ENCODE measurements at regions of chr6 and their contacts with region 1.

Region 1: GRCh38 chr6:57172136-57173055 is at the start of gene BAG2:
- DNase-seq: peak; percentile 86 to 93 (median 91)
- ATAC-seq: peak; percentile 71 to 97 (median 95)
- H3K4me3 ChIP-seq: peak within 1 kb of the TSS; percentile 55 to 86 (median 78)
- H3K27ac ChIP-seq: peak within 1 kb of the TSS; percentile 31 to 97 (median 92)
- H3K4me1 ChIP-seq: peaks cover 0 to 32% (median 12%) of the 10 kb centered on the region in 12 donors
- H3K27me3 ChIP-seq: no peaks in the 10 kb centered on the region
- CTCF ChIP-seq: peak in 9 of 12 donors; percentile 9 to 50 (median 23)
- POLR2A ChIP-seq: peak in 1 of 2 donors; percentile 84
- total RNA-seq, gene BAG2: 8.2 to 18.0 (median 11.6) TPM

Region 2: DNA sequence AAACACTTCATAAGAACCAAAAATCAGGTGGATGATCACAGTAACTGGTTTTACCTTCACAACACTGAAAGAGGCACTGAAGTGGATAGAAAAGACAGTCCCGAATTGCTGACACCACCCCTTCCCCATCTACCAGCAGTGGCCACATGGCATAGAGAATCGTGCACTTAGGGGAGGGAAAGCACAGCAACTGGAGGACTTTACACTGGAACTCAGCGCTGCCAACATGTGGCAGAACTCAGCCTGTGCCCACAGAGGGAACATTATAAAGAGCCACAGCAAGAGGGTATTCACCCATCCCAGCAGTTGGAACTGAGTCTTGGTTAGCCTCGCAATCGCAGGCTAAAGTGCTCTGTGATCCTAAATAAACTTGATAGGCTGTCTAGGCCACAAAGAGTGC is 132.4 kb before region 1 on chr6:
- intact Hi-C with region 1: loop called in 1 of 10 experiments (anchors 10 kb)
- DNase-seq: no peak
- ATAC-seq: no peak
- H3K4me3 ChIP-seq: no peak overlapping the region
- H3K27ac ChIP-seq: no peak overlapping the region
- H3K4me1 ChIP-seq: no peaks in the 10 kb centered on the region
- H3K27me3 ChIP-seq: peaks cover 0 to 12% (median 0%) of the 10 kb centered on the region in 9 donors
- CTCF ChIP-seq: no peak
- POLR2A ChIP-seq: no peak

Region 3: DNA sequence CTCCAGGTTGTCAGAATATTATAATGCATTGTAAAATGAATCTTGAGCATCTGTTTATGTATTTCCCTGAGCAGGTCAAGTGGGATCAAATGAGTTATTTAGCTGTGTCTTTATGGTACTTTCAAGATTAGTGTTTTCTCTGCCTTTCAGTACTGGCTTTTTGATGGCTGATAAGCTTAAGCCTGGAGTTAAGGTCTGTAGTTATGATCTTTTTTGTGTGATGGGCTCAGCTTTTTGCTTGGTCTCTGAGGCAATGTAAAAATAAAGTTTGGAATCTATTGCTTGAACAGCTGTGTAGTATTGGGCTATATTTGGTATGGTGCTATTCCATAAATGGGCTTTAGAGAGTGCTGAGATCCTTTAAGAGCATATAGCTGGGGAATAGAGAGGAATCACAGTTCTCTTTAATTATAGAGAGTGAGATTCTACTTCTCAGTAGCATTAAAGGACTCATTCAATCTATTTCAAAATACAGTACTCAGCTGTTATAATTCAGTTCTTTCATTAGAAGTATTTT is 41.7 kb before region 1 on chr6:
- intact Hi-C with region 1: loop called in 1 of 10 experiments (anchors 2 kb)
- DNase-seq: no peak
- ATAC-seq: peak in 2 of 4 donors; percentile 58 to 62
- H3K4me3 ChIP-seq: no peak overlapping the region
- H3K27ac ChIP-seq: no peak overlapping the region
- H3K4me1 ChIP-seq: peaks cover 0 to 16% (median 11%) of the 10 kb centered on the region in 12 donors
- H3K27me3 ChIP-seq: no peaks in the 10 kb centered on the region
- CTCF ChIP-seq: peak in 2 of 12 donors; percentile 7 to 12
- POLR2A ChIP-seq: no peak

Region 4: DNA sequence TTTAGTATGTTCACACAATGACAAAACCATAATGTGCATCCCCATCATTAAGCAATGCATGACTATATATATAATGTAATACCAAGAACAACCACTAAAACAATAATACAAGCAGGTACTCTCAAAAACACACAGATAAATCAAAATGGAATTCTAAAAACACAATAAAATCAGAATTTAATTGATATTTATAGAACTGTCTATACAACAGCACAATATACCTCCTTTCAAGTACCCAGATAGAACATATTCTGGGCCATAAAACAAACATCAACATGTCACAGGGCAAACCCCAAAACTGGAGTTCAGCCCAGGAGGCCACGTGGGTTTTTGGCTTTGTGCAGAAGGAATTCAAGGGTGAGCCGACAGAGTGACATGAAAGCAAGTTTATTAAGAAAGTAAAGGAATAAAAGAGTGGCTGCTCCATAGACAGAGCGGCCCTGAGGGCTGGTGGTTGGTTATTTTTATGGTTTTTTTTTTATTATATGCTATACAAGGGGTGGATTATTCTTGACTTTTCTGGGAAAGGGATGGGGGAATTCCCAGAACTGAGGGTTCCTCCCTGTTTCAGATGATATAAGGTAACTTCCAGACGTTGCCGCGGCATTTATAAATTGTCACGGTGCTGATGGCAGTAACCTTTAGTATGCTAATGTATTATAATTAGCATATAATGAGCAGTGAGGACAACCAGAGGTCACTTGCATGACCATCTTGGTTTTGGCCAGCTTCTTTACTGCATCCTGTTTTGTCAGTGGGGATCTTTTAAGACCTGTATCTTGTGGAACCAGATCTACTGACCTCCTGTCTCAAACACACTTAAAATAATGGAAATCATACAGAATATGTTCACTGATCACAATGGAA is 44.1 kb after region 1 on chr6:
- intact Hi-C with region 1: loop called in 4 of 10 experiments (anchors 2 to 5 kb)
- DNase-seq: peak in 3 of 5 donors; percentile 23 to 45 (median 30)
- ATAC-seq: peak; percentile 42 to 81 (median 58)
- H3K4me3 ChIP-seq: no peak overlapping the region
- H3K27ac ChIP-seq: peak overlapping the region in 2 of 12 donors; percentile 25 to 32
- H3K4me1 ChIP-seq: peaks cover 0 to 11% (median 0%) of the 10 kb centered on the region in 12 donors
- H3K27me3 ChIP-seq: no peaks in the 10 kb centered on the region
- CTCF ChIP-seq: peak in 3 of 12 donors; percentile 43 to 69 (median 60)
- POLR2A ChIP-seq: no peak

Region 5: GRCh38 chr6:57221936-57222742 is 49.7 kb after region 1 on chr6 and contains the start of gene RAB23:
- intact Hi-C with region 1: loop called in 4 of 10 experiments (anchors 2 to 5 kb)
- DNase-seq: peak; percentile 84 to 94 (median 89)
- ATAC-seq: peak; percentile 98 to 99 (median 98)
- H3K4me3 ChIP-seq: peak within 1 kb of the TSS; percentile 64 to 98 (median 86)
- H3K27ac ChIP-seq: peak within 1 kb of the TSS; percentile 14 to 96 (median 84)
- H3K4me1 ChIP-seq: peaks cover 0 to 15% (median 3%) of the 10 kb centered on the region in 12 donors
- H3K27me3 ChIP-seq: no peaks in the 10 kb centered on the region
- CTCF ChIP-seq: peak in 2 of 12 donors; percentile 5 to 34
- POLR2A ChIP-seq: peak in 1 of 2 donors; percentile 86
- total RNA-seq, gene RAB23: 7.6 to 15.4 (median 9.6) TPM

Region 6: DNA sequence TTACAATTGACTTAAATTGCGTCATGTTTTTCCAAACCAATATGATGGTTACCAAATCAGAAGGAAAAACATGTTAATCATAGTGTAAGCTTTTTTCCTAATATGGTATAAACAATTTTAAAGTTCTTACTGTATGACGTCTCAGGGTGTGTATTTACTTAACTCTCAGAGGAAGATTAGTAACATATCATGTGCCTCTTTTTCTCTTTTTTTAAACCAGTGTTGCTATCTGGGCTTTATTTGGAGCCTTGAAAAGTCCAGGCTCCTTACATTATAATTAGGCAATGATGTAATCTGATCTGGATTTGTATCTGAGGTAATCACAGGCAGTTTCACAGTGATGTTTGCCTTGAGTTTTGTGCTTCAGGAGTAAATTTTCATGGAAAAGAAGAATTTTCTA is 70.1 kb after region 1 on chr6:
- intact Hi-C with region 1: no loop called
- DNase-seq: no peak
- ATAC-seq: peak in 3 of 4 donors; percentile 39 to 78 (median 59)
- H3K4me3 ChIP-seq: no peak overlapping the region
- H3K27ac ChIP-seq: peak overlapping the region in 2 of 12 donors; percentile 6 to 14
- H3K4me1 ChIP-seq: peaks cover 0 to 5% (median 0%) of the 10 kb centered on the region in 12 donors
- H3K27me3 ChIP-seq: no peaks in the 10 kb centered on the region
- CTCF ChIP-seq: no peak
- POLR2A ChIP-seq: no peak

Measured in heart left ventricle (tissue), 16 donors.